ENCODE measurements at regions of chr4 and their contacts with region 1.

Region 1: DNA sequence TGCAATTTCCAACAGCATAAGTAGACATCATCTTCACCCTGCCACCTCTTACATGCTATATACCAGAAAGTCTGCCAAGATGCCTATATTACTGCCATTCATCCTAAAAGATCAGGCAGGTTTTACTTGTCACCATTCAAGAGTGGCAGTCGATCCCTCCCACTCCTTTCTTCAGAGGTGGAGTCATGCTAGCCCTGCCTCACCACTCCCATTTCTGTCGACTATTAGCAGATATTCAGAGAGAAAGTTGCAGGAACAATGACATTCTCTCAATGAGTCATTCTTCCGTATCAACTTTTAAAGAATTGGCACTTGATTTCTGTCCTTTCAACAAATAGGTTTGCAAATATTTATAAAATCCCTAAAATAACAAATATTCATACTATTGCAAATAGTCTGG is 1060.1 kb downstream of the ADGRL3 start:
- DNase-seq: no peak
- H3K4me3 ChIP-seq: no peak overlapping the region
- H3K27ac ChIP-seq: no peak overlapping the region
- H3K4me1 ChIP-seq: no peaks in the 10 kb centered on the region
- H3K27me3 ChIP-seq: no peaks in the 10 kb centered on the region
- CTCF ChIP-seq: no peak
- POLR2A ChIP-seq: no peak

Region 2: GRCh38 chr4:60432911-60433310 is 1827.3 kb before region 1 on chr4:
- intact Hi-C with region 1: loop called (anchors 5 kb)
- DNase-seq: no peak
- H3K4me3 ChIP-seq: no peak overlapping the region
- H3K27ac ChIP-seq: no peak overlapping the region
- H3K4me1 ChIP-seq: no peaks in the 10 kb centered on the region
- H3K27me3 ChIP-seq: no peaks in the 10 kb centered on the region
- CTCF ChIP-seq: no peak
- POLR2A ChIP-seq: no peak

Region 3: DNA sequence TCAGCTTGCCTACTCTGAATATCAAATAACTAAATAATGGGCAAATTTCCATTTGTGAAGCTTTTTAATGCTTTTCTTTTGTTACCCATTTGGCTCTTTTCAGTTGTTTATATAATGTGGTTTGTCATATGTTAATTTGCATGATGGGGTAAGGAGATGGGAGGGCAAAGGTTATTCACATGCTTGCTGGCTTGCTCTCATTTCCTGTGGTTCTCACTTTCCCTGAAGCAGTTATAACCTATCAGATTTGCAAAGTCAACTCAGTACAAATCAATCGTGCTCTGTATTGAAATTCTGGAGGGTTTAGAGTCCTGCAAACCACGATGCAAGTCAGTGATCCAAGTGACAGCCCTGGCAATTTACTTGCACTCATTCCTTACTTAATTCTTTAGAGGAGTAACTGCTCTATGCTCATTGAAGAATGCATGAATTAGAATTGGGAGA is 348.9 kb before region 1 on chr4:
- intact Hi-C with region 1: no loop called
- DNase-seq: no peak
- H3K4me3 ChIP-seq: no peak overlapping the region
- H3K27ac ChIP-seq: no peak overlapping the region
- H3K4me1 ChIP-seq: no peaks in the 10 kb centered on the region
- H3K27me3 ChIP-seq: no peaks in the 10 kb centered on the region
- CTCF ChIP-seq: no peak
- POLR2A ChIP-seq: no peak

Region 4: GRCh38 chr4:62366939-62367338 is 106.7 kb after region 1 on chr4:
- intact Hi-C with region 1: no loop called
- DNase-seq: no peak
- H3K4me3 ChIP-seq: no peak overlapping the region
- H3K27ac ChIP-seq: no peak overlapping the region
- H3K4me1 ChIP-seq: no peaks in the 10 kb centered on the region
- H3K27me3 ChIP-seq: no peaks in the 10 kb centered on the region
- CTCF ChIP-seq: no peak
- POLR2A ChIP-seq: no peak